ENCODE measurements at regions of chr2 and their contacts with region 1.

Region 1: GRCh38 chr2:72887754-72888437 is 688 bp downstream of the SPR start:
- DNase-seq: peak; percentile 32
- H3K4me3 Mint-ChIP-seq: peak overlapping the region; percentile 81
- H3K27ac Mint-ChIP-seq: no peak overlapping the region
- H3K4me1 Mint-ChIP-seq: no peaks in the 10 kb centered on the region
- H3K27me3 Mint-ChIP-seq: peaks cover 44% of the 10 kb centered on the region

Region 2: DNA sequence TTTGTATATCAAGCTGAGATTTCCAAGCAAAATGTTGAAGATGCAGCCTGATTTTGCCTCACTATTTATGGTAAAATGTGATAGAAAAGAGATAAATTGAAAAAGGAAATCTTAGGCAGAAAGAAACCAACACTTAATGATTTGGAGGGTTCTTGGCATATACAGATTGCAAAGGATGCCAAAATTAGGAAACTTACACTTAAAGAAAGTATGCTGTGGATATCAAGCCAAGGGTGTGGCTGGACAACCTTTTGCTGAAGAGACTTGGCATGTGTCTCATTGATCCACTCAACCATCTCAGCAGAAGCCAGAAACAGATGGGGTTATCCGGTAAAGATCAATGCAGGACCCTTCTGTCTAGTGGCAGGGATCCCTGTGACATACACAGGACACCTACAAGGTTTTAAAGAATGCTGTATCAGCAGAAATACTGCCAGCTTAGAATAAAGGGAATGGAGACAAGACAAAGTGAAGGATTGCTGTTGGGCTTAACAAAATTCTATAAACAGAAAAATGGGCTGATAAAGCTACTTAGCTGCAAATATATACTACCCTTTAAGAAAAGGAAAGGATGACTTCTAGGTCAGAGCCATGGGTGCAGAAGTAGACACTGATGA is 633.0 kb before region 1 on chr2:
- intact Hi-C with region 1: no loop called
- DNase-seq: no peak
- H3K4me3 Mint-ChIP-seq: no peak overlapping the region
- H3K27ac Mint-ChIP-seq: no peak overlapping the region
- H3K4me1 Mint-ChIP-seq: no peaks in the 10 kb centered on the region
- H3K27me3 Mint-ChIP-seq: no peaks in the 10 kb centered on the region

Region 3: GRCh38 chr2:72862239-72862988 is 25.5 kb before region 1 on chr2:
- intact Hi-C with region 1: loop called (anchors 1 kb)
- DNase-seq: peak; percentile 80
- H3K4me3 Mint-ChIP-seq: peak overlapping the region; percentile 54
- H3K27ac Mint-ChIP-seq: no peak overlapping the region
- H3K4me1 Mint-ChIP-seq: peaks cover 15% of the 10 kb centered on the region
- H3K27me3 Mint-ChIP-seq: peaks cover 29% of the 10 kb centered on the region

Region 4: GRCh38 chr2:72973566-72974435 is 85.9 kb after region 1 on chr2:
- intact Hi-C with region 1: loop called (anchors 1 kb)
- DNase-seq: peak; percentile 17
- H3K4me3 Mint-ChIP-seq: no peak overlapping the region
- H3K27ac Mint-ChIP-seq: no peak overlapping the region
- H3K4me1 Mint-ChIP-seq: no peaks in the 10 kb centered on the region
- H3K27me3 Mint-ChIP-seq: peaks cover 2% of the 10 kb centered on the region

Region 5: DNA sequence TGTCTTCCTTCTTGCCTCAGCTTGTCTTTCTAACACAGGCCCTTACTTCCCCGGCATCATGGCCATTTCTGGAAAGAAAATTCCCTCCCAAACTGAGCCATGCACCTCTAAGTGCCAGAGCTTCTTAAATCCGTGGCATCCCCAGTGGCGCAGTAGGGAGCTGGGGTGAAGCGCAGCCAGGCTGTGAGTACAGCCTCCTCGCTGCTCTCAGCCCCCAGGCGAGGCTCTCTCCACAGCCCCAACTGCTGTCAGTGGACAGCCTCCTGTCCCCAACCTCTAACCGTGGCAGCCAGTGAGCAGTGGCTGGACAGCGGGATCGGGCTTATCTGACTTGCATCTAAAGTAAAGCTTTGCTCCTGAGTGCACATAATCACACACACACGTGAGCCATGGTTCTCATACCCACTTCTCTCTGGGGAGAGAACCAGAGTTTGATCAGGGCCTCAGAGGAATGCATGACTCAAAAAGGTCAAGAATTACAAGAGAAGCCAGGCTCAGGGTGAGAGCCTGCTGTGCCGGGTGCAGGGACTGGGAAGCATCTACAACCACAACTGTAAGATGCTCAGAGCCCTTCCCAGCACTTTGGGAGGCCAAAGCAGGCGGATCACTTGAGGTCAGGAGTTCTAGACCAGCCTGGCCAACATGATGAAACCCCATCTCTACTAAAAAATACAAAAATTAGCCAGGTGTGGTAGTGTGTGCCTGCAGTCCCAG is 132.9 kb after region 1 on chr2:
- intact Hi-C with region 1: no loop called
- DNase-seq: no peak
- H3K4me3 Mint-ChIP-seq: no peak overlapping the region
- H3K27ac Mint-ChIP-seq: no peak overlapping the region
- H3K4me1 Mint-ChIP-seq: no peaks in the 10 kb centered on the region
- H3K27me3 Mint-ChIP-seq: peaks cover 2% of the 10 kb centered on the region

Region 6: DNA sequence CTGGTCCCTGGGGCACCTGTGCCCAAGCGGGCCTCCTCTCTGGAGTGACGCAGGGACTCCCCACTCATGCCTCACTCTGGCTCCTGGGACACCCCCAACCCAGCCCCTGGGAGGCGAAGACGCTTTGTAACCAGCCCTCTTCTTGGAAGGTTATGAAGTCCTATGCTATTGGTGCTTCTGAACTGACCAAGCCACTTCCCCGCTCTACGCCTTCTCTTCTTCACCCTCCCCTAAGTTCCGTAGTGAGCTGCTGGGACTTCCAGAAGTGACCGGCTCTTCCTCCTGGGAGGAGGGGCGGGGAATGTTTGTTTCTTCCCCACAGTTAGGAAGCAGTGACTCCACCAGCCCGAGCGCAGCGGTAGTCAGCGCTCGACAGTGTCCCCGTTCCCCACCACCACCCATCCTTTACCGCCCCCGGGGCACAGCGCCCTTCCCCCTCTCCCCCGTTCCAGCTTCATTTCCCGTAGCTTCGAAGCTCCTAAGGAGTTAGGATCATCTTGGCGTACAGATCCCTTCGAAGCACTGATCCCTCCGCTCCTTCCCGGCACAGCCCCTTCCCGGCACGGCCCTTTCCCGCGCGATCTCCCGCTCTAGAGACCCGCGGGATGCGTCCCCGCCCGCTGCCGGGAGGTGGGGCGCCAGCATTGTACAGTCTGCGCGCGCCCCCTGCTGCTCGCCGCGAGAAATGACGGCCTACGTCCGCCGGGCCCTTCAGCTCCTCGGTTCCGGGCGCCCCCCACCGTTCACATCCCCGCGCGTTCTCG is 289.2 kb after region 1 on chr2:
- intact Hi-C with region 1: loop called (anchors 1 kb)
- DNase-seq: peak; percentile 77
- H3K4me3 Mint-ChIP-seq: peak overlapping the region; percentile 84
- H3K27ac Mint-ChIP-seq: peak overlapping the region; percentile 50
- H3K4me1 Mint-ChIP-seq: peaks cover 26% of the 10 kb centered on the region
- H3K27me3 Mint-ChIP-seq: peaks cover 50% of the 10 kb centered on the region

Measured in activated T-helper 1 cell treated with anti-CD3 and anti-CD28 coated beads, Interleukin-12 subunit alpha, Interleukin-12 subunit beta, Interleukin-2, Interleukin-4 antibody, amounts not matched to agents 30 ng/mL and 10 ng/mL and 1 ng/mL, durations not matched to agents 14 hours and 24 hours and 36 hours (primary cell).